ENCODE measurements at regions of chr21 and their contacts with region 1.

Region 1: DNA sequence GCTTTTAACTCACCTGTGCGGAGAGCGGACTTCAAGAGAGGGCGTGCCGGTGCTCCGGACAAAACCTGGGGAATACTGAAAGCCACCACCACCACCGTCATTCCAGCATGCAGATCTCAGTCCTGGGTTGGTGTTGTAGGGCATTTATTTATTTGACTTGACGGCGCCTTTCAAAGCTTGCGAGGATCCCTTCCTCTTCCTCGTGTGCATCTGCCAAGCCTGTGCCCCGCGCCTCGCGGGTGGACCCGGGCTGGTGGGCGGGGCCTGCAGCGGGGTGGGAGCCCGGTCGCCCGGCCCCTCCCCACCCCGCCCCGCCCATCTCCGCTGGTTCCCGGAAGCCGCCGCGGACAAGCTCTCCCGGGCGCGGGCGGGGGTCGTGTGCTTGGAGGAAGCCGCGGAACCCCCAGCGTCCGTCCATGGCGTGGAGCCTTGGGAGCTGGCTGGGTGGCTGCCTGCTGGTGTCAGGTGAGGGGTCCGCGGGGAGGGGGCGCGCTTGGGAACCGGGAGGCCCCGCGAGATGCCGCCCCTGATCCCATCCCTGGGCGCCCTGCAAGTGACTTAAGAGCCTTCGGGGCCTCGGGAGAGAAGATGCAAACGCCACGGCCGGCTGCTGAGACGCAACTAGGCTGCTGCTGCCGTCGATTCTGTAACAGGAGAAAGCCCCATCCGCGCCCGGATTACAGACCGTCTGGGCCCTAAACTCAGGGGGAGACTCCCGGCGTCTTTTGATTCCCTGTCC is at the start of gene IL10RB:
- DNase-seq: peak; percentile 71
- ATAC-seq: peak; percentile 74
- H3K4me3 Mint-ChIP-seq: peak within 1 kb of the TSS; percentile 92
- H3K27ac Mint-ChIP-seq: peak within 1 kb of the TSS; percentile 95
- H3K4me1 Mint-ChIP-seq: peaks cover 66% of the 10 kb centered on the region
- H3K27me3 Mint-ChIP-seq: no peaks in the 10 kb centered on the region
- CTCF ChIP-seq: no peak
- total RNA-seq, gene IL10RB: 36.7 and 37.9 TPM in 2 replicates

Region 2: DNA sequence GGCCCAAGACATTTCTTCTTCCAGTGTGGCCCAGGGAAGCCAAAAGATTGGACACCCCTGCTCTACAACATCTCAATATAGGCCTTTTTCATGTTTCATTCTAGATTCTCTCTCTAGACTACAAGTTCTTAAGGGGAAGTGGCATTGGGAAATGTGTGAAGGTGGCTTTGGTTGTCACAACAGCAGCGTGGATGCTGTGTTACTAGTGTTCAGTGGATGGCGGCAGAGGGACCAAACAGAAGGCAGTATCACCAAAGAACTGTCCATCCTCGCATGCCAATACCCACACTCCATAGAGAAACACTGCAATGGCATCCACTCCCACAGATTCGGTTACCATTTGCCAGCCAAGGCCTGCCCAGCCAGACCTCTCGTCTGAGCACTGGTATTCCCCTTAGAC is 60.7 kb before region 1 on chr21:
- CTCF ChIA-PET with region 1: interaction called, 7 read pairs
- POLR2A ChIA-PET with region 1: interaction called, 27 read pairs
- intact Hi-C with region 1: loop called (anchors 1 kb)
- DNase-seq: no peak
- ATAC-seq: peak; percentile 16
- H3K4me3 Mint-ChIP-seq: peak overlapping the region; percentile 73
- H3K27ac Mint-ChIP-seq: peak overlapping the region; percentile 94
- H3K4me1 Mint-ChIP-seq: peaks cover 53% of the 10 kb centered on the region
- H3K27me3 Mint-ChIP-seq: no peaks in the 10 kb centered on the region
- CTCF ChIP-seq: no peak

Region 3: GRCh38 chr21:33247599-33247998 is 18.6 kb before region 1 on chr21:
- CTCF ChIA-PET with region 1: interaction called, 3 read pairs
- POLR2A ChIA-PET with region 1: no interaction called
- intact Hi-C with region 1: loop called (anchors 1 kb)
- DNase-seq: no peak
- ATAC-seq: no peak
- H3K4me3 Mint-ChIP-seq: no peak overlapping the region
- H3K27ac Mint-ChIP-seq: no peak overlapping the region
- H3K4me1 Mint-ChIP-seq: peaks cover 16% of the 10 kb centered on the region
- H3K27me3 Mint-ChIP-seq: no peaks in the 10 kb centered on the region
- CTCF ChIP-seq: no peak

Region 4: DNA sequence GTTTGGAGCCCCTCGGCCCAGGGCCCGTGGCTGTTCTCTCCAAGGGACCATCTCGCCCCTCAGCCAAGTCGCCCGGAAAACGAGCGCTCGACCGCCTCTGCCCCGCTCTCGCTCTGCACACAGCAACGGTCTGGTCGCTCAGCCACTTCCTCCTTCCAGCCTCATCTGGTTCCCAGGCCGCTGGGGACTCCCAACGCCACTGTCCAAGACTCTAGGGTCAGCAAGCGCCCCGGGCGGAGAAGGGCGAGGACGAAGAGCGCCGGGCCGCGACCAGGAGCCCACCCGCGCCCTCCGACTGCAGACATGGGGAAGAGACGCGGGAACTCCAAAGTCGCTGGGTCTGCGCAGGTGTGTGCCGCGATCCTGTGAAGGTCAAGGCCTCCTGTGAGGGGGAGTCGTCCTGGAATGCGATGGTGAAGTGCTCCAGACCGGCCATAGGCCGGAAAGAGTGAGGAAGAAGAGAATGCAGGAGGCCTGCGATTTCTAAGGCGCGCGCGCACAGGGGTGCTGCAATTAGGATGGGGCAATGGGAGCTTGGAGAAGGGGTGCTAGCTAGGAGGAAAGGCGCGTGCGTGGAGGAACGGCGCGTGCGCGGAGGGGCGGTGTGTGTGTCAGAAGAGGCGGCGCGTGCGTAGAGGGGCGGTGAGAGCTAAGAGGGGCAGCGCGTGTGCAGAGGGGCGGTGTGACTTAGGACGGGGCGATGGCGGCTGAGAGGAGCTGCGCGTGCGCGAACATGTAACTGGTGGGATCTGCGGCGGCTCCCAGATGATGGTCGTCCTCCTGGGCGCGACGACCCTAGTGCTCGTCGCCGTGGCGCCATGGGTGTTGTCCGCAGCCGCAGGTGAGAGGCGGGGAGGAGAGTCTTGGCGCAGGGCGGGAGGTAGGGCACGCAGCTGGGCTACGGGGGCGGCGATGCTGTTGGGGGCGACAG is 58.3 kb after region 1 on chr21 and contains the start of gene IFNAR1:
- CTCF ChIA-PET with region 1: interaction called, 6 read pairs
- POLR2A ChIA-PET with region 1: interaction called, 51 read pairs
- intact Hi-C with region 1: loop called (anchors 1 kb)
- DNase-seq: peak; percentile 97
- ATAC-seq: peak; percentile 80
- H3K4me3 Mint-ChIP-seq: no peak within 1 kb of the TSS
- H3K27ac Mint-ChIP-seq: no peak within 1 kb of the TSS
- H3K4me1 Mint-ChIP-seq: peaks cover 32% of the 10 kb centered on the region
- H3K27me3 Mint-ChIP-seq: no peaks in the 10 kb centered on the region
- CTCF ChIP-seq: no peak
- total RNA-seq, gene IFNAR1: 33.9 and 34.5 TPM in 2 replicates

Region 5: GRCh38 chr21:33434770-33435360 is 168.6 kb after region 1 on chr21:
- CTCF ChIA-PET with region 1: no interaction called
- POLR2A ChIA-PET with region 1: no interaction called
- intact Hi-C with region 1: loop called (anchors 2 kb)
- DNase-seq: no peak
- ATAC-seq: peak; percentile 90
- H3K4me3 Mint-ChIP-seq: peak overlapping the region; percentile 55
- H3K27ac Mint-ChIP-seq: peak overlapping the region; percentile 88
- H3K4me1 Mint-ChIP-seq: peaks cover 64% of the 10 kb centered on the region
- H3K27me3 Mint-ChIP-seq: no peaks in the 10 kb centered on the region
- CTCF ChIP-seq: no peak